ENCODE measurements at regions of chr18 and their contacts with region 1.

Region 1: DNA sequence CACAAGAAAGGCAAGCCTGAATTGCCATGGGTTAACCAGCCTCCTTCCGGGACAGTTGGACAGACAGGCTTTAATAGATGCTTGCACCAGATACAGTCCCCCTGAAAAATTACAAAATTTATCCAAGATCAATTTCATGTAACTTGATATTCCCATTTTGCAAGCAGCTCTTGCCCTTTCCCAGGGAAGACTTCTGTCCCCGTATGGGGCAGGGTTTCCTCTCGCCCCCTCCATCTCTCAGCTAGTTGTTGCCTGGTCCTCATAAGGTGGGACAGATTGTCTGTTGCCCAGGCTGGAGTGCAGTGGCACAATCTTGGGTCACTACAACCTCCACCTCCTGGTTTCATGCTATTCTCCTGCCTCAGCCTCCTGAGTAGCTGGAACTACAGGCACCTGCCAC is 61.2 kb downstream of the TTC39C start:
- DNase-seq: no peak
- ATAC-seq: no peak

Region 2: GRCh38 chr18:23994361-23994902 is 81.3 kb before region 1 on chr18:
- intact Hi-C with region 1: loop called in 1 of 2 experiments (anchors 5 kb)
- DNase-seq: peak; percentile 43
- ATAC-seq: peak; percentile 35 to 83